Mammary epithelial cell (primary cell): ENCODE measurements at regions of chr11 and their contacts with region 1.

Region 1: DNA sequence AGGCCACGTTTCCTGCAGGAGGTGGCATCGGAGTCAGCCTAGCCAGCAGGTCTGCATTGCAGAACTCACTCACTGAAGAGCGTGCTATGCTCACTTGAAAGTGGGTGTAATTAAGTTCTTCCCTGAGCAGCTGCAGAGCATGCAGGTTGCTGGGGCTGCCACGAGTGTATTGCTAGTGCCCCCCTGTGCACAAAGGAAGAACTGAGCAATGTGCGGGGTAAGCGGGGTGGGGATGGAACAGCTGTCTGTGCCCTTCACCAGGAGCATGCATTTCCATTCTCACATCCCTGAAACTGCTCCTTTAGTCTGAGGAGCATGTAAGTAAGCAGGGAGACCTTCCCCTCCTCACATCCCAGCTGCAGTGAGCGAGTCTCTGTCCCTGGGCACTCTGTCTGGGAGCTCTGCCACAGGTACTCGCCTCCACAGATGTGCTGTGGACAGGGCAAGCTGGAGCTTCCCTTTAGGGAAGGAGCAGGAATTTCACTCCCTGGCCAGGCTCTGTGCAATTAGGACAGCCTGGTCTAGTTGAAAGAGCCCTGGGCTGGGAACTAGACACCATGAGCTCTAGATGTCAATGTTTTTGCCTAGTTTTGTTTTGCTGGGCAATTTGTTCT is 1031.8 kb downstream of the NTM start:
- DNase-seq: peak; percentile 39
- H3K4me3 ChIP-seq: no peak overlapping the region
- H3K27ac ChIP-seq: no peak overlapping the region
- H3K4me1 ChIP-seq: no peaks in the 10 kb centered on the region
- H3K27me3 ChIP-seq: no peaks in the 10 kb centered on the region
- CTCF ChIP-seq: peak; percentile 62 to 71

Region 2: DNA sequence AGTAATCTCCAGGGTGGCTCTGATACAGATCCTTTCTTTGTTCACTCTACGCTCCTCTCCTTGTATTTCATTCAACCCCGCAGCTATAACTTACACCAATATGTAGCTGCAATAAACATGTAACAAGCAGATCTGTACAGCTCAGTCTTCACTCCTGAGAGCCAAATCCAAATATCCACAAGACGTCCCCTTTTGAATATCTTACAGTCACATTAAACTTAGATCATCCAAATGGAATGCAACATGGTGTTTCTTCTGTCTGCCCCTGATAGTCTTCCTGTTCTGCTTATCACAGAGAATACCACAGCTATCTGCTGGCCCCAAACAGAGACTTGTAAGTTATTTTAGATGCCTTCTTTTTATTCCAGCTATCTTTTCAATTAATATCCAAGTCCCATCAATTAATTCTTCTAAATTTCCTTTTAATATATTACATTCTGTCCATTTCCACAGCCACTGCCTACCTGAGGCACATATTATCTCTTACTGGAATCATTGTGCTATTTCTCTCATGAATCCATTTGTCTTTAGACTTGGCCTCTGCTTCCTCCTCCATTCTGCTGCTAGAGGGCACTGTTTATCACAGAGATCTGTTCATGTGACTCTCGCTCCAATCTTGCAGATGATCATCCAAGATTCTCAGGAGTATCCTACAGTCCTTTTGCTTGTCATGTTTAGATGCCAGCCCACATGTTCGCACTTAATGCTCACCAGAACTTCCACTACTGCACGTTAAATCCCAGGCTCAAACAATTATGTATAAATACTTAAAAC is 123.2 kb before region 1 on chr11:
- CTCF ChIA-PET with region 1: no interaction called
- dilution Hi-C with region 1: no loop called
- in situ Hi-C with region 1: no loop called
- intact Hi-C with region 1: loop called (anchors 10 kb)
- DNase-seq: peak; percentile 24
- H3K4me3 ChIP-seq: no peak overlapping the region
- H3K27ac ChIP-seq: no peak overlapping the region
- H3K4me1 ChIP-seq: no peaks in the 10 kb centered on the region
- H3K27me3 ChIP-seq: no peaks in the 10 kb centered on the region
- CTCF ChIP-seq: peak; percentile 47 to 75

Region 3: DNA sequence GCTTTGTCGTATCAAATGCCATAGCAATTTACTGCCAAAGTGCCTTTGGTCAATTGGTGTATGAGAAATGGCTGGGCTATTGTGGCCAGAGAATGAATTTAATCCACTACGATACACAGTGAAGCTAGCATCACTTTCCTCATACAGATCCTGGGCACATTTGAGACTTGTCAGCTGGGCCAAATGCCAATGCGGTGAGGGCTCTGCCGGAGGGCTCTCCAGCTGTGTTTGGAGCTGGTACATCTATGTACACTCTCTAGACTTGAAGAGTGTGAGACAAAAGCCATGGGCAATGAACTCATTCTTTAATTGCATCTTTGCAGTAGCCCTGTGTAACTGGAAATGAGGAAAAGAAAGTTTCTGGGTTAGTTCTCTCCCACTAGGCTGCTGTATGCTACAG is 21.1 kb after region 1 on chr11:
- CTCF ChIA-PET with region 1: no interaction called
- dilution Hi-C with region 1: no loop called
- in situ Hi-C with region 1: no loop called
- intact Hi-C with region 1: no loop called
- DNase-seq: peak; percentile 10
- H3K4me3 ChIP-seq: no peak overlapping the region
- H3K27ac ChIP-seq: no peak overlapping the region
- H3K4me1 ChIP-seq: peaks cover 2% of the 10 kb centered on the region
- H3K27me3 ChIP-seq: no peaks in the 10 kb centered on the region
- CTCF ChIP-seq: no peak